BJ (cell line): ENCODE measurements at regions of chr19 and their contacts with region 1.

Region 1: GRCh38 chr19:8609279-8610040 is 1.1 kb downstream of the ADAMTS10 start:
- DNase-seq: no peak
- H3K4me3 ChIP-seq: peak overlapping the region; percentile 69
- H3K27me3 ChIP-seq: no peaks in the 10 kb centered on the region
- CTCF ChIP-seq: peak; percentile 49

Region 2: GRCh38 chr19:8592231-8593009 is 17.0 kb before region 1 on chr19:
- CTCF ChIA-PET with region 1: interaction called, 11 read pairs
- POLR2A ChIA-PET with region 1: no interaction called
- DNase-seq: peak; percentile 71
- H3K4me3 ChIP-seq: peak overlapping the region; percentile 20
- H3K27me3 ChIP-seq: no peaks in the 10 kb centered on the region
- CTCF ChIP-seq: no peak